Caco-2 (cell line): ENCODE measurements at regions of chr12 and their contacts with region 1.

Region 1: GRCh38 chr12:2959505-2960389 is 550 bp downstream of the TEAD4 start:
- DNase-seq: peak; percentile 79 to 81
- H3K4me3 ChIP-seq: peak overlapping the region; percentile 94
- H3K4me3 Mint-ChIP-seq: peak overlapping the region; percentile 87
- H3K27ac Mint-ChIP-seq: peak overlapping the region; percentile 89
- H3K4me1 ChIP-seq: peaks cover 36% of the 10 kb centered on the region
- H3K4me1 Mint-ChIP-seq: peaks cover 46% of the 10 kb centered on the region
- H3K27me3 ChIP-seq: no peaks in the 10 kb centered on the region
- H3K27me3 Mint-ChIP-seq: no peaks in the 10 kb centered on the region
- CTCF ChIP-seq: no peak

Region 2: DNA sequence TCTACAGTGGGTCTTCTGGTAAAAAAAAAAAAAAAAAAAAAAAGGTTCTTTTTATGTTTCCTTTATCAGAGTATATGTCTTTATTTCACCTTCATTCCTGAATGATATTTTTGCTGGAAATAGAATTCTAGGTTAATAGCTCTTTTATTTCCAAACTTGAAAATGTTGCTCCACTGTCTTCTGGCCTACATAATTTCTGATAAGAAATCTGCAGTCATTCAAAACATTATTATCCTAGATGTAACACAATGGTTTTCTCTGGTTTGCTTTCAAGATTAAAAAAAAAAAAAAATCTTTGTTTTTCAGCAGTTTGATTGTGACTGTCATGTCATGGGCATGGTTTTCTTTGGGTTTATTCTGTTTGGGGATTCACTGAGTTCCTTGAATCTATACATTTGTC is 975.0 kb before region 1 on chr12:
- CTCF ChIA-PET with region 1: no interaction called
- POLR2A ChIA-PET with region 1: interaction called, 10 read pairs
- intact Hi-C with region 1: no loop called
- DNase-seq: no peak
- H3K4me3 ChIP-seq: no peak overlapping the region
- H3K4me3 Mint-ChIP-seq: no peak overlapping the region
- H3K27ac Mint-ChIP-seq: no peak overlapping the region
- H3K4me1 ChIP-seq: no peaks in the 10 kb centered on the region
- H3K4me1 Mint-ChIP-seq: no peaks in the 10 kb centered on the region
- H3K27me3 ChIP-seq: no peaks in the 10 kb centered on the region
- H3K27me3 Mint-ChIP-seq: no peaks in the 10 kb centered on the region
- CTCF ChIP-seq: no peak

Region 3: DNA sequence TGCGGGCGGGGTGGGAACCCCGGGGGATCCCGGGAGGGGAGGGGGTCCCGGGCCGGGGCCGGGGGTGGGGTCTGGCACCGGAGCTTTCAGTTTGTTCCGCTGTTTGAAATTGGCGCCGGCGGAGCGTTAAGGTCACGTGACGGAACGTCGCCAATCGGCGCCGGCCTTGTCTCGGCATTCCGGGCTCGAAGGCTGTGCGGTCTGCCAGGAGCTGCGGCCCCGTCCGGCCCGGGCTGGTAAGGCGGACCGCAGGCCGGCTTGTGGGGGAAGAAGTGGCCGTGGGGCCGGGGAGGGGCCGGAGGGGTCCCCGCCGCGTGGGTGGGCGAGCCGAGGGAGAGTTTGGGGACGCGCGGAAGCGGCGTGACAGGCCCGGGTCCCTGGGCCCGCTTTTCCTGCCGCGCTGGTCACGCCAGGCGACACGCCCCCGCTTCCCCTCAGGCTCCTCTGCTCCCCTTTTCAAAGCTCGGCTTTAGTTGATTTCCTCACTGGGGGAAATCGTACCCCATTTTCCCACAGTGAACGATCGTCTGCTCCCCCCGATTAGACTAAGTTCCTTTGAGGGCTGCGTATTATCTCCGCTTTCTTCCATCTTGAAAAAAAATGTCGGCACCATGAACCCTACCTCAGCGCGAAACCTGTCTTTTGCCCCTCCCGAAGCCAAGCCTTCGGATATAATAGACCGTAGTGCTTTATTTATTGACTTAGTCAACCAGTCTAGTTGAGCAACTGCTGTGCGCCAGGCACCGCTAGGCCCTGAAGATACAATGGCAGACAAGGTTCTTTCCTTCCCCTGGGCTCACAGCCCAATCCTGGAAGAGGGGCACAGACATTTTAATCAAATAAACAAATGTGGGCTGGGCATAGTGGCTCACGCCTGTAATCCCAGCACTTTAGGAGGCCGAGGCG is 82.4 kb before region 1 on chr12 and contains the starts of genes FOXM1 and RHNO1:
- CTCF ChIA-PET with region 1: no interaction called
- POLR2A ChIA-PET with region 1: interaction called, 4 read pairs
- intact Hi-C with region 1: loop called (anchors 1 kb)
- DNase-seq: peak; percentile 94 to 97
- H3K4me3 ChIP-seq: peak within 1 kb of the TSS; percentile 96
- H3K4me3 Mint-ChIP-seq: peak within 1 kb of the TSS; percentile 75
- H3K27ac Mint-ChIP-seq: peak within 1 kb of the TSS; percentile 99
- H3K4me1 ChIP-seq: peaks cover 28% of the 10 kb centered on the region
- H3K4me1 Mint-ChIP-seq: peaks cover 31% of the 10 kb centered on the region
- H3K27me3 ChIP-seq: no peaks in the 10 kb centered on the region
- H3K27me3 Mint-ChIP-seq: no peaks in the 10 kb centered on the region
- CTCF ChIP-seq: peak in 1 of 2 experiments; percentile 28
- total RNA-seq, gene FOXM1: 217 and 222 TPM in 2 replicates
- total RNA-seq, gene RHNO1: 99.1 and 99.8 TPM in 2 replicates

Region 4: DNA sequence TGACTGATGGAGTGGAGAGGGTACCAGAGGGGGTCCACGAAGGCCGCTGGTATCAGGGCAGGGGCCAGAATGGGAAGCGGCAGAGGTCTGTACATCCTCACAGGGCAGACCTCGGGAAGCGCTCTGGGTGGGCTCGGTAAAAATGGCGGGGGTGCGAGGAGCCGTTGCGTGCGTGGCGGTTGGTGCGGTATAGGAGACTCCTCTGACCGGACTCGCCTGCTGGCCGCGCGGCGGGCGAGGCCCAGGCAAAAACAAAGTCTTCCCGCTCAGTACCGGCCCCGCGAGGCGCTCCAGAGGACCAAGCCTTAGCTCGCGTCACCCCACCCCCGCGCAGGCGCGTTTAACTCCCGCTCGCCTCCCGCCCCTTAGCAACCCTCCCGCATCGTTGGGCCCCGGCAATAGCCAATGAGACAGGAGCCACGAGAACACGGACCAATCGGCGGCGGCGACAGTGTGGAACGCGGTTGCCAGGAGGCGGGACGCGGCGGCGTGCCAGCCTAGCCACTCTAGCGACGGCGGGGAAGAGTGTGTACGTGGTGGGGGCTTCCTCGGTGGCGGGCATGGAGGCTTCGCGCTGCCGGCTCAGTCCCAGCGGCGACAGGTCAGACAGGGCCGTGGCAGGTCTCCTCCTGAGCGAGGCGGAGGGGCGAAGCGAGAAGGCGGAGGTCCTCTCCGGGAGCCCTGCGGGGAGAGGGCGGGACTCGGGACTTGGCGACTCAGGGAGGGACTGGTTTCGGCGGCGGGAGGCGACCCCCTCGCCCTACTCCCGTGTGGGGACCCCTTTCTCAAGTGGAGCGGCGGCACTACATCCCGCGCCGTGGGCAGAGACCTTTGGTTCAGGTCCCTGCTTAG is 69.1 kb before region 1 on chr12 and contains the start of gene TULP3:
- CTCF ChIA-PET with region 1: interaction called, 7 read pairs
- POLR2A ChIA-PET with region 1: interaction called, 5 read pairs
- intact Hi-C with region 1: loop called (anchors 2 kb)
- DNase-seq: peak; percentile 100
- H3K4me3 ChIP-seq: peak within 1 kb of the TSS; percentile 91
- H3K4me3 Mint-ChIP-seq: peak within 1 kb of the TSS; percentile 82
- H3K27ac Mint-ChIP-seq: peak within 1 kb of the TSS; percentile 91
- H3K4me1 ChIP-seq: peaks cover 18% of the 10 kb centered on the region
- H3K4me1 Mint-ChIP-seq: peaks cover 15% of the 10 kb centered on the region
- H3K27me3 ChIP-seq: no peaks in the 10 kb centered on the region
- H3K27me3 Mint-ChIP-seq: no peaks in the 10 kb centered on the region
- CTCF ChIP-seq: peak in 1 of 2 experiments; percentile 18
- total RNA-seq, gene TULP3: 31.0 and 31.7 TPM in 2 replicates

Region 5: DNA sequence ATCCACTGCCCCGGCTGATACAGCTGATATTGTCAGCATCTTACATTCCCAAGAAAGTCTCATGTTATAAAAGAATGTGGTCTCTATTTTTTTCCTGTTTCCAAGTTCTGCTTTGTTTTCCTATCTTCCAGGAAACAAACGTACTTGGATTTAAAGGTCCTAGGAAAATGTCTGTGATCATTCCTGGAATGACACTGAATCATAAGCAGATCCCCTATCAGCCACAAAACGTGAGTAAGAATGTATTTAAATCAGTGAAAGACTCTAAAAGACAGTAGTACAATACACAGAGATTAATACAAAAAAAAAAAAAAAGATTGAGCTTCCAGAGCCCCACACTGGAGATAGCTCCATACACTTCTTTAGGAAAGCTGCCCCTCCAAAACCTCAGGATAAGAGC is 22.2 kb before region 1 on chr12:
- CTCF ChIA-PET with region 1: no interaction called
- POLR2A ChIA-PET with region 1: no interaction called
- intact Hi-C with region 1: no loop called
- DNase-seq: no peak
- H3K4me3 ChIP-seq: no peak overlapping the region
- H3K4me3 Mint-ChIP-seq: no peak overlapping the region
- H3K27ac Mint-ChIP-seq: no peak overlapping the region
- H3K4me1 ChIP-seq: no peaks in the 10 kb centered on the region
- H3K4me1 Mint-ChIP-seq: no peaks in the 10 kb centered on the region
- H3K27me3 ChIP-seq: no peaks in the 10 kb centered on the region
- H3K27me3 Mint-ChIP-seq: no peaks in the 10 kb centered on the region
- CTCF ChIP-seq: no peak

Region 6: GRCh38 chr12:3034067-3034750 is 74.5 kb after region 1 on chr12:
- CTCF ChIA-PET with region 1: interaction called, 3 read pairs
- POLR2A ChIA-PET with region 1: no interaction called
- intact Hi-C with region 1: loop called (anchors 5 kb)
- DNase-seq: peak; percentile 87 to 89
- H3K4me3 ChIP-seq: no peak overlapping the region
- H3K4me3 Mint-ChIP-seq: no peak overlapping the region
- H3K27ac Mint-ChIP-seq: peak overlapping the region; percentile 43
- H3K4me1 ChIP-seq: no peaks in the 10 kb centered on the region
- H3K4me1 Mint-ChIP-seq: no peaks in the 10 kb centered on the region
- H3K27me3 ChIP-seq: no peaks in the 10 kb centered on the region
- H3K27me3 Mint-ChIP-seq: no peaks in the 10 kb centered on the region
- CTCF ChIP-seq: peak; percentile 84 to 96